Activated CD4-positive, alpha-beta memory T cell treated with anti-CD3 and anti-CD28 coated beads for 36 hours (primary cell): ENCODE measurements at regions of chr2 and their contacts with region 1.

Region 1: GRCh38 chr2:15560988-15561573 is at the start of gene NBAS:
- DNase-seq: peak; percentile 91
- H3K4me3 Mint-ChIP-seq: peak within 1 kb of the TSS; percentile 99
- H3K27ac Mint-ChIP-seq: peak within 1 kb of the TSS; percentile 94
- H3K4me1 Mint-ChIP-seq: peaks cover 31% of the 10 kb centered on the region
- H3K27me3 Mint-ChIP-seq: peaks cover 3% of the 10 kb centered on the region
- total RNA-seq, gene NBAS: 40.1 to 44.0 TPM

Region 2: DNA sequence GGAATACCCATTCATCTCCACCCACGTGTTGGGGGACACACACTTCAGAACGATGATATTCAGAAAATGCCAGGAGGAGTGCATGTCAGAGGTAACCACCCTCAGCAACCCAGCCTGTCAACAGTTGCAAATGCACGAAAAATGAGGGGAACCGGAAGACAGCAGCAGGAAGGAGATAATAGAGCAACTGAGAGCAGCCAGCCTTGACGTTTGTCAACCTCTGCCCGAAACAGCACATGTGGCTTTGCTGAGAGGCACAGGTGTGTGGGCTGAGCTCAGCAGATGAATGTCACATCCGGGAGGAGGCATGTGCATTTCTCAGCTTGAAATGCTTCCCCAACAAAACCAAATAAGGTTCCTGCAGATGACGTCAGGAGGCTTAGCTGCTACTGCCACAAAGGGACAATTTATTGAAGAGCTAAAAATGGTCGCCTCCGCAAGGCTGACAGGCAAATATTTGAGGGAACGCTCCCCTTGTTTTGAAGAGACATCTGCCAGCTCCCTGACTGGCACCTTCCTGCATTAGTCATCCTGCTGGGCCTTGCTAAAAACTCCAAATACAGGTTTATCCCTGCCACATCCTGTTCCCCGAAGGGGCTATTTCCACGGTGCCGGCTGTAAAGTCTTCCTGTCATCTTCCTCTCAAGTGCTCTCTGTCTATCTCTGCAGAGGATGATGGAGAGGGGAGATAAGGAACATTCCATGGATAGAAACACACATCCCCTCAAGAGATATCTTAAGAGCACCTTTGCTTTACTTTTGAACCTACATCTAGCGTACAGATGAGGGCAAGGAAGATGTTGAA is 418.8 kb before region 1 on chr2:
- CTCF ChIA-PET with region 1: no interaction called
- POLR2A ChIA-PET with region 1: no interaction called
- intact Hi-C with region 1: loop called (anchors 1 kb)
- DNase-seq: peak; percentile 89
- H3K4me3 Mint-ChIP-seq: peak overlapping the region; percentile 52
- H3K27ac Mint-ChIP-seq: peak overlapping the region; percentile 83
- H3K4me1 Mint-ChIP-seq: peaks cover 28% of the 10 kb centered on the region
- H3K27me3 Mint-ChIP-seq: no peaks in the 10 kb centered on the region

Region 3: GRCh38 chr2:15189216-15189615 is 371.9 kb before region 1 on chr2:
- CTCF ChIA-PET with region 1: no interaction called
- POLR2A ChIA-PET with region 1: no interaction called
- intact Hi-C with region 1: no loop called
- DNase-seq: no peak
- H3K4me3 Mint-ChIP-seq: no peak overlapping the region
- H3K27ac Mint-ChIP-seq: no peak overlapping the region
- H3K4me1 Mint-ChIP-seq: peaks cover 4% of the 10 kb centered on the region
- H3K27me3 Mint-ChIP-seq: no peaks in the 10 kb centered on the region

Region 4: GRCh38 chr2:15313657-15314056 is 247.4 kb before region 1 on chr2:
- CTCF ChIA-PET with region 1: no interaction called
- POLR2A ChIA-PET with region 1: no interaction called
- intact Hi-C with region 1: loop called (anchors 10 kb)
- DNase-seq: no peak
- H3K4me3 Mint-ChIP-seq: no peak overlapping the region
- H3K27ac Mint-ChIP-seq: no peak overlapping the region
- H3K4me1 Mint-ChIP-seq: peaks cover 35% of the 10 kb centered on the region
- H3K27me3 Mint-ChIP-seq: no peaks in the 10 kb centered on the region

Region 5: DNA sequence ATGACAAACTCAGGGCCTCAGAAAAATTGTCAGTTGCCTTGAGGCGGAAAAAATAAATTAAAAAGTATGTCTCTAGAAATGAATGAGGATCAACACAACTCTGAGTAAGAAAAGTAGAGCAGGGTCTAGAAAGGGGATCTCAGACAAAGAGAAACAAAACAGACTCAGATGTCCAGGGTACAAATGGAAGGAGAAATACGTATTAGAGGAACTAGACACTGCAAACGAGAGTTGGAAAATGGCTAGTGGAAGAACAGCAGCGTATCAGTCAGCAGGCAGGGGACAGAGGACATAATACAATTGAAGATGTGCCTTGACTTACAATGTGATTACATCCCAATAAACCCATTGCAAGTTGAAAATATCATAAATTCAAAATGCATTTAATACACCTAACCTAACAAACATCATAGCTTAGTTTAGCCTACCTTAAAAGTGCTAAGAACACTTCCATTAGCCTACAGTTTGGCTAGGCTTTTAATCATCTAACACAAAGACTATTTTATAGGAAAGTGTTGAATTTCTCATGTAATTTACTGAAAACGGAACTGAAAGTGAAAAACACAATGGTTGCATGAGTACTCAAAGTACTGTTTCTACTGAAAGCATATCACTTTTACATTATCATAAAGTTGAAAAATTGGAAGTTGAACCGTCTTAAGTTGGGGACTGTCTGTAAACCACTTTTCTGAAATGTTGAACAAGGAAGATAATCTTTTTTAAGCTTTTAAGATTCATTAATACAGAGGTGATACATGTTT is 182.8 kb before region 1 on chr2:
- CTCF ChIA-PET with region 1: no interaction called
- POLR2A ChIA-PET with region 1: no interaction called
- intact Hi-C with region 1: loop called (anchors 10 kb)
- DNase-seq: no peak
- H3K4me3 Mint-ChIP-seq: no peak overlapping the region
- H3K27ac Mint-ChIP-seq: no peak overlapping the region
- H3K4me1 Mint-ChIP-seq: peaks cover 14% of the 10 kb centered on the region
- H3K27me3 Mint-ChIP-seq: no peaks in the 10 kb centered on the region

Region 6: DNA sequence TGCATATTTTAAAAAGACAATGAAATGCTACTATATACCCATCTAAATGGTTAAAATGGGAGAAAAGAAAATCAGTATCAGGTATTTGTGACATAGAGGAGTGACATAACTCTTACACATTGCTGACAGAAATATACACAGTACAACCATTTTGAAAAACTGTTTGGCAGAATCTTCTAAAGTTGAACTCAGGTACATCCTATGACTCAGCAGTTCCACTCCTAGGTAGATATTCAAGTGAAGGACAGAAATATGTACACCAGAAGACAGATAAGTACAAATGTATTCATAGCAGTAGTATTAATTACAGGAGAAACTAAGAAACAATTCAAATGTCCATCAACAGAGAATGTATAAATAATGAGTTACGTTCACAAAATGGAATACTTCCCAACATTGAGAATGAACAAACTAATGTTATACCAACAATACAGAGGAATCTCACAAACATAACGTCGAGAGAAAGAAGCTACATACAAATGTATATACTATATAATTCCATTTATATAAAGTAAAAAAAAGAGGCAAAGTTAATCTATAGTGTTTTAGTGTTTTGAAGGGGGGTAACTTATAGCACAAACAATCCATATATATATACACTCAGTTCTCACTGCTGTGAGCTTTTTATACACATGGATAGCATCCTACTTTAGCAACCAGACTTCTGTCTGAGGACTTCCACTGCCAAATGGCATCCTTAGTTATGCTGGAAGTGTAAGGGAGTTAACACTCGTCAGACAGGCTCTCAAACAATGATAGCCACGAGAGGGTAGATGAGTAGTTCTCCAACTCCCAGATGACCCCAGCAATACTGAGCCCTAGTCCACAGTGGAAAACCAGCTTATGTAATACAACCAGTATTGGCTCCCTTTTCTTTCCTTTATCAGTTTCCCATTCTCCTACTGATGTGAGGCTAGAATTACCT is 172.4 kb before region 1 on chr2:
- CTCF ChIA-PET with region 1: no interaction called
- POLR2A ChIA-PET with region 1: no interaction called
- intact Hi-C with region 1: no loop called
- DNase-seq: no peak
- H3K4me3 Mint-ChIP-seq: no peak overlapping the region
- H3K27ac Mint-ChIP-seq: no peak overlapping the region
- H3K4me1 Mint-ChIP-seq: no peaks in the 10 kb centered on the region
- H3K27me3 Mint-ChIP-seq: no peaks in the 10 kb centered on the region

Region 7: GRCh38 chr2:15472876-15473275 is 88.2 kb before region 1 on chr2:
- CTCF ChIA-PET with region 1: no interaction called
- POLR2A ChIA-PET with region 1: no interaction called
- intact Hi-C with region 1: no loop called
- DNase-seq: no peak
- H3K4me3 Mint-ChIP-seq: no peak overlapping the region
- H3K27ac Mint-ChIP-seq: no peak overlapping the region
- H3K4me1 Mint-ChIP-seq: no peaks in the 10 kb centered on the region
- H3K27me3 Mint-ChIP-seq: no peaks in the 10 kb centered on the region

Region 8: GRCh38 chr2:15577071-15577735 is 16.1 kb after region 1 on chr2:
- CTCF ChIA-PET with region 1: interaction called, 73 read pairs
- POLR2A ChIA-PET with region 1: interaction called, 3 read pairs
- intact Hi-C with region 1: no loop called
- DNase-seq: peak; percentile 92
- H3K4me3 Mint-ChIP-seq: no peak overlapping the region
- H3K27ac Mint-ChIP-seq: no peak overlapping the region
- H3K4me1 Mint-ChIP-seq: no peaks in the 10 kb centered on the region
- H3K27me3 Mint-ChIP-seq: peaks cover 2% of the 10 kb centered on the region

Region 9: DNA sequence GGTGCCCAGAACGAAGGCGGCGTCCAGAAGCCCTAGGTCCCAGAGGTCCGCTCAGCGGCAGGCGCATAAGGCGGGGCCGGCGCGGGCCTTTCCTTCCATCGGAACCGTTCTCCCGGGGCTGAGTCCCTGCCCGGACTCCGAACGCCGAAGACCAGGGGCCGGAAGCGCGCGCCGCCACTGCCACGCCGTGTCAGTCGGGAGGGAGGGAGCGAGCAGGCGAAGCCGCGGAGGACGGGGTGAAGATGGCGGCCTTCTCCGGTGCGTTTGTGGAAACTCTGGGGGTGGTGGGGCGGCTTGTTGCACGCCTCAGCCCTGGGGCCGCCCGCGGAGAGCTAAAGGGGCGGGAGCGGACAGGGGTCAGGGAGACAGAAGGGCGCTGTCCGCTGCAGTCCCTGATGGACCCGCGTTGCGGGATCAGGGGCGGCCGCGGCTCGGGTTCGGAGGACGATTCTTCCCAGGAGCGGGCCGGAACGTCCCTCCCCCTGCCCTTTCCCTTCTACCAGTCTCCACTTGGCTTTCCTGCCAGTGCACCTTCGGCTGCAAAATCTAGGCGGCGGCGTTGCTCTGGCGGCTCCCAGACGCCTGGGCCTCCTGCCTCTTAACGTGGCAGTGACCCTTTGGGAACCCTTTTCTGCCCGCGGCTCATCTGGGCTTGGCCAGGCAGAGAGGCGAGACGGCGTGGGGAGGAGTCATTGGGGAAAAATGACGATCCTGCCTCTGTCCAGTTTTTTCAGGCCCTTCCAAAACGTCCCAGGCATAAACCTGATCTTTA is 30.8 kb after region 1 on chr2 and contains the start of gene DDX1:
- CTCF ChIA-PET with region 1: interaction called, 4 read pairs
- POLR2A ChIA-PET with region 1: interaction called, 17 read pairs
- intact Hi-C with region 1: loop called (anchors 1 kb)
- DNase-seq: peak; percentile 91
- H3K4me3 Mint-ChIP-seq: peak within 1 kb of the TSS; percentile 94
- H3K27ac Mint-ChIP-seq: peak within 1 kb of the TSS; percentile 91
- H3K4me1 Mint-ChIP-seq: peaks cover 29% of the 10 kb centered on the region
- H3K27me3 Mint-ChIP-seq: no peaks in the 10 kb centered on the region
- total RNA-seq, gene DDX1: 79.7 to 81.1 TPM

Region 10: DNA sequence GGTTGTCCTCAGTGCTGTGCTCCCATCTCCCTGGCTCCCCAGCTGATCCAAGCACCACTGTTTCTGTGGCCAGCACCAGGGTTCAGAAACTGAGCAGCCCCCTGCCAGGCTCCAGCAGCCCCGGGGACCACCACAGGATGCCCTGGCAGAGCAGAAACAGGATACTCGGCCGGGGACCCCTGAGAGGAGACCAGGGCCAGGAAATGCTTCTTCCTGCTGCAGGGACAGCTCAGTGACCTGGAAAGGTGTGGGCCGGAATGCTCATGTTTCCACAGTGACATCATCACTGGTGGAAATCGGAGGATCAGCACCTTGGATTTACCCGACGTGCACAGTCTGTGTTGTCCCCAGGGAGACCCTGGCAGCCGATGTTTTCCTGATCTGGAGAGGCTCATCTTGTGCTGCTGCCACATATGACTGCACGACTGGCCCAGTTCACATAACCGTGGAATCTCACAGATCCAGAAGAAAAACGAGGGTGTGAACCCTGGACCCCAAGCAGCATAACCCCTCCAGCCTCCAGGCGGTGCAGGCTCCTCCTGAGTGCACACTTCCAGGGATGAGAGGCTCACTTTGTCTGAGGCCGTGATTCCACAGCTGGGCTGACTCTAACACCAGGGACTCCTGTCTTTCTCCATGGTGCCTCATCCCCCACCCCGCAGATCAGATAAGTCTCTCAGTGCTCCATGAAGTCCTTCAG is 88.6 kb after region 1 on chr2:
- CTCF ChIA-PET with region 1: no interaction called
- POLR2A ChIA-PET with region 1: no interaction called
- intact Hi-C with region 1: no loop called
- DNase-seq: no peak
- H3K4me3 Mint-ChIP-seq: no peak overlapping the region
- H3K27ac Mint-ChIP-seq: no peak overlapping the region
- H3K4me1 Mint-ChIP-seq: no peaks in the 10 kb centered on the region
- H3K27me3 Mint-ChIP-seq: no peaks in the 10 kb centered on the region